Adrenal gland (tissue), 19 donors: ENCODE measurements at regions of chr1 and their contacts with region 1.

Region 1: DNA sequence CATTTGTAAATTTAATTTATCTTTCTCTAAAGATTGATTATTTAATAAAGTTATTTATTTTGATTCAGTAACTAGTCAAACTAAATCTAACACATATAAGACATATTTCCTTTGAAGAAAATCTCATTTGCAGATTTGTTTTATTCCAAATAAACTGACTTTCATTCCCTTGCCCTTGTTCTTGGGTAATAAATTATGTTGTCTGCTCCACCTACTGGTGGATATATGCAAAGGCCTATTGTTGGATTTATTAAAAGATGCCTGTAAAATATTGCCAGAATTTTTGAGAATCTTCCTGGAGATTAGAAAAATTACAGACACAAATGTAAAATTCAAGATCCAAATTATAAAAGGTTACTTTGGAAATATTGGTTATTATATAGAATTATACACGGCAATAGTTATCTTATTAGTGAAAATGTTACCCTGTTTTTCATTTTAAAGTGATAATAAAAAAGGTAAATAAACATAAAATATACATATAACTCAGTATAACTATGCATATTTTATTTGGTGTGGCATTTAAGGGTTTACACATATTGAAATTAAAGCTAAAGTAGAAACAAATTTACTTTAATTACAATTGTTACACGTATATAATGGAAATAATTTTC is 116.1 kb downstream of the SPATA17 start:
- DNase-seq: no peak
- H3K4me3 ChIP-seq: no peak overlapping the region
- H3K27ac ChIP-seq: no peak overlapping the region
- H3K4me1 ChIP-seq: no peaks in the 10 kb centered on the region
- H3K27me3 ChIP-seq: no peaks in the 10 kb centered on the region
- CTCF ChIP-seq: peak; percentile 43 to 70 (median 57)
- POLR2A ChIP-seq: no peak

Region 2: DNA sequence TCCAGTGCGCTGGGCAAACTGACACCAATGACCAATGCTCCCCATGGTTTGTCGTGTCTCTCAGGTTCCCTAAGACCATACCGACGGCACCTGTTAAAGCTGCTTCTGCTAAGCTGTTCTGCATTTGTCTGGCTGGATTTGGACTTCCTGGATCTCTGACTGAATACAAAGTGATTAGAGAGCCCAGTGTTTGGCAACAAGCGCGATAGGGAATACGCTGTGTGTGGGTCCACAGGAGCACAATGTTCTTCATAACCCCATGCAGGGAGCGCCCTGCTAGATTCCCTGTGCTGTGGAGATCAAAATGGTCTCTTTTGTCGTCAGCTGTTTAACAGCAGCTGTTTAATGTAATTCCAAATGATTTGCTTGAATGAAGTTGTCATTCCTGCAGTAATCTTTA is 998.0 kb before region 1 on chr1:
- intact Hi-C with region 1: loop called in 1 of 2 experiments (anchors 5 kb)
- DNase-seq: no peak
- H3K4me3 ChIP-seq: no peak overlapping the region
- H3K27ac ChIP-seq: no peak overlapping the region
- H3K4me1 ChIP-seq: no peaks in the 10 kb centered on the region
- H3K27me3 ChIP-seq: no peaks in the 10 kb centered on the region
- CTCF ChIP-seq: no peak
- POLR2A ChIP-seq: no peak

Region 3: DNA sequence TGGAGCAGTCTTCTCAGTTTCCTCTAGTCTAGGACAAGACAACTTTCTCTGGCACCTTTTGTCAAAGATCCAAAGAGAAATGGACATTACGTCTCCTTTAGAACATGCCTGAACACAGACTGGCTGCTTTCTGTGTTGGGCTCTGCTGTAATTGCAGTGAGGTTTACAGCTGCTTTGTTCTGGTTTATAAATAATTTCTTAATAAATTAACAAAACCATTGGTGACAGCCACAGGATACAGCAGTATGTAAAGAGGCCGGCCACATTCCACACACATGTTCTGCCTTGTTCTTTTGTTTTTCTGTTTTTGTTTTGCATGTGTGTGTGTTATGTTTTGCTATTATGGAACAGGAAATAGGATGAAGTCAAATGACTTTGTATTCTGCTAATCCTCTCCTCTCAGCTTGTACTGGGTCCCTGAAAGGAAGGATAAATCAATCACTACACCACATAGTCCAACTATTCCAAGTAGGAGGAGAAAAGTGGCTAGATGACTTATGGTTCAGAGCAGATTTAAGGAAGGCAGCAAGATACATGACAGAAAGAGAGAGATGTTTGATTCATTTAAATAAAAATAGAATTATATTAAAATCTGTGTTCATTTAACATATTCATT is 862.5 kb before region 1 on chr1:
- intact Hi-C with region 1: no loop called
- DNase-seq: no peak
- H3K4me3 ChIP-seq: no peak overlapping the region
- H3K27ac ChIP-seq: no peak overlapping the region
- H3K4me1 ChIP-seq: no peaks in the 10 kb centered on the region
- H3K27me3 ChIP-seq: no peaks in the 10 kb centered on the region
- CTCF ChIP-seq: no peak
- POLR2A ChIP-seq: no peak